AG04449 (cell line): ENCODE measurements at regions of chr15 and their contacts with region 1.

Region 1: GRCh38 chr15:85044251-85044853 is 62.7 kb downstream of the PDE8A start:
- DNase-seq: no peak
- H3K4me3 ChIP-seq: no peak overlapping the region
- CTCF ChIP-seq: peak; percentile 78

Region 2: GRCh38 chr15:84600851-84601838 is 443.2 kb before region 1 on chr15 and contains the start of gene ZSCAN2:
- CTCF ChIA-PET with region 1: interaction called, 18 read pairs
- POLR2A ChIA-PET with region 1: no interaction called
- DNase-seq: peak; percentile 38
- H3K4me3 ChIP-seq: peak within 1 kb of the TSS; percentile 97
- CTCF ChIP-seq: no peak

Region 3: DNA sequence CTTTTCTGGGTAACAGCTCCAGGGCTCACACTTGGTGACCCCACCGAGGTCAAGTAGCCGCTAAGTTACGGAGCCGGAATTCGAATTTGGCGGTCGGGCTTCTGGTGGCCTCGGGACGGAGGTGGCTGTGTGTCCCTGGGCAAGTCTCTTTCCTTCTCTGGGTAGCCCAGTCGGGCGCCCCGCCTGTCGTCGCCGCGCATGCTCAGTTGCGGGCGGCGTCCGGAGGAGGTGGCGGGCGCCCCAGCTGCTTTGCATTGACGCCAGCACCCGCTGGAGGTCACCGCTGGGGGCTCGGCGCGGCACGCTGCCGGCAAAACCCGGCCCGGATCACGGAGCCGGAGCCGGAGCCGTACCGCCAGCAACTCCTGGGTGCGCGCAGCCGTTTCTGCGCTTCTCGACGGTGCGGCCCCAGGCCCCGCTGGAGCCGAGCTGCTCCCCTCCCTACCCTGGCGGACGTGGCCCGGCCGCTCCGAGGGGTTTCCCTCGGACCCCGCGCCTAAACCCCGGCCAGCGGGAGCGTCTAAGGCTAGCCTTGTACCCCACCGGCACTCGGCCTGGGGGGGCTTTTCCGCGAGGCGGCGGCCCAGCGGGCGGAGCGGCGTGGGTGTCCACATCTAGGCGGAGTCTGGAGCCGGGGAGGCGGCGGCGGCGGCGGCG is 63.2 kb before region 1 on chr15:
- CTCF ChIA-PET with region 1: interaction called, 15 read pairs
- POLR2A ChIA-PET with region 1: interaction called, 5 read pairs
- DNase-seq: peak; percentile 63
- H3K4me3 ChIP-seq: peak overlapping the region; percentile 79
- CTCF ChIP-seq: peak; percentile 45

Region 4: DNA sequence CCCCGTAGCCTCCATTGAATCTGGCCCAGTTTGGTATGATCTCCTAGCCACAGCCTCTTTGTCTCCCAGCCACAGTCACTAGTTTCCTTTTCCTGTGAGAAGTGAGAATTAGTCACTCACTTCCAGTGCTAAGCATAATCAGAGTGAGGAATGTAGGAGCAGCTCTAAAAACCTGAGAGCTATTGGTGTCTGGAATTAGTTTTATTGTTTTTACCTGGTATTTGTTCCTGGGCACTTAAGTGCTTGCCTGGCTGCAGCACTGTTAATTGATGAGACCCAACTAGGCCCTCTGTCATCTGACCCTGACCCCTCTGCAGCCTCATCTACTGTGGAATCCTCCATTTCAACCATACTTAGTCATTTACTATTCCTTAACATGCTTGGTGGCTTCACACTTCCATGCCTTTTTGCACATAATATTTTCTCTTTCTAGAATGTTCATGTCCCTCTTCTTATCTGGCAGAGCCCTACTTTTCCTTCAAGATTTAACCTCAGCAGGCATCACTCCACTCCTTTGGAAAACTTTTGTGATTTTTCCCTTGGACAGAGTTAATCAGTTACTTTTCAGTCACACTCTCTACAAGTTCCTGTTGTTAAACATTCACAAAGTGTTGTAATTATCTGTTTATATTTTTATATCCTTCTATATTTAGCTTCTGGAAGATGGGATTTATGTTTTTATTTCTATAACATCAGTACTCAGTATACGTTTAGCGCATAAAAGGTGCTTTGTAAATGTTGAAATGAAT is 13.9 kb before region 1 on chr15:
- CTCF ChIA-PET with region 1: interaction called, 55 read pairs
- POLR2A ChIA-PET with region 1: no interaction called
- DNase-seq: no peak
- H3K4me3 ChIP-seq: no peak overlapping the region
- CTCF ChIP-seq: no peak